ENCODE measurements at regions of chr17 and their contacts with region 1.

Region 1: GRCh38 chr17:15273141-15273793 is 8.1 kb upstream of the PMP22 start:
- DNase-seq: no peak
- ATAC-seq: peak in 1 of 8 donors; percentile 37
- H3K4me3 ChIP-seq: no peak overlapping the region
- H3K27ac ChIP-seq: peak overlapping the region in 2 of 10 donors; percentile 38 to 44
- H3K4me1 ChIP-seq: peaks cover 0 to 37% (median 23%) of the 10 kb centered on the region in 9 donors
- H3K27me3 ChIP-seq: no peaks in the 10 kb centered on the region
- CTCF ChIP-seq: no peak

Region 2: DNA sequence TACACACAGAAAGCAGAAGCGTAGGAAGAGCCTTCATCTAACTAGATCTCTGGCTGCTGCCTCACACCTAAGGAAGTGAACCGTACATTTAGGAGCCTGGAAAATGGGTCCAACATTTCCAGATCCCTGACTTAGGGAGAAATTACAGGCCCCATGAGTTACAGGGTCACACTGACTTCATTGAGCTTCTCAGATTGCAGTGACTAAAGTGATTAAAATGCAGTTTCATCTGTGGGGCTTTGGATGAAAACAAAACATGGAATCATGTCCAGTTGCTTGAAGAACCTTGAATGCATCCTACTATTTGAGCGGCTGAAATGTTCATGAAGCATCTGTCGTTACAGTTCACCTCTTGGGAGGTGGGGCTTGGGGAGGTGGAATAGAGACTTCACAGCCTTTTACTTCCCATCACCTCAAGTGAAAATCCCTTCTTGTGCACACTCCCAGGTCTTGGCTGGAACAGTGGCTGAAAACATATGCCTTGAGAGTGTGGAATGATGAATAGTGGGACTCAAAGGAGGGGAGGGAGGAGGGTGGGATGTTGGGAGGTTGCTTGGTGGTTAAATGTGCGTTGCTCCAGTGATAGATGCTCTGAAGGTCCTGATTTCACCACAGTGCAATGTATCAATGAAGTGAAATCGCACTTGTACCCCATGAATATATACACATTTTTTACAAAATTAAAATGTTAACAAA is 48.4 kb after region 1 on chr17:
- intact Hi-C with region 1: loop called in 1 of 10 experiments (anchors 5 kb)
- DNase-seq: no peak
- ATAC-seq: no peak
- H3K4me3 ChIP-seq: no peak overlapping the region
- H3K27ac ChIP-seq: no peak overlapping the region
- H3K4me1 ChIP-seq: peaks cover 0 to 6% (median 0%) of the 10 kb centered on the region in 9 donors
- H3K27me3 ChIP-seq: no peaks in the 10 kb centered on the region
- CTCF ChIP-seq: no peak